ENCODE measurements at regions of chr4 and their contacts with region 1.

Region 1: DNA sequence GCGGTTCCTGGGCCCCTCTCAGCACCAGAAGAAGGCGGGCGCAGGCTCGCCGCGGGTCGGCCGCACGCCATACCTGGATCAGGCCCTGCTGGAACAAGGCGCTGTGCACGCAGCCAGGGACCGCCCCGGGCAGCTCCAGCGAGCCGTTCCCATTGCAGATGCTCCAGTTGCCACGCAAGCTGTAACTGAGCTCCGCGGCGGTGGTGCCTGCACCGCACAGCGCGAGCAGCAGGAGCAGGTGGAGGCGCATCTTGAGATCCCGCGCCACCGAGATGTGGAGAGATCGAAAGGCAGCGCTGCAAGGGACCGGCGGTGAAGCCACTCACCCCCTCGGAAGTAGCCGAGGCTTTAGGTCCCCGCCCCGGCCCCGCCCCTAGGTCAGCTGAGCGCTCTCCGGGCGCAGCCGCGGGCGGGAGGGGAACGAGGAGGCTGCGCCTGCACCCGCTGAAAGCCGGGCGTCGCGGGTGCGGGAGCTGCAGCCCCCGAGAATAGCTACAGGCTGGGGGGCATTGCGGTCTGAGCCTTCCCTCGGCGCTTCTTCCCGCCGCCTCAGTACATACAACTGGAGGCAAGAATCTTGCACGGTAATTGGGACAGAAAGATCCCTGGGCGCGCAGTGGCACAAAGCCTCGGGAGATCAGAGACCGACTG is at the start of gene MANBA:
- DNase-seq: peak; percentile 77
- ATAC-seq: peak; percentile 79
- H3K4me3 Mint-ChIP-seq: peak within 1 kb of the TSS; percentile 93
- H3K27ac Mint-ChIP-seq: peak within 1 kb of the TSS; percentile 96
- H3K4me1 Mint-ChIP-seq: peaks cover 51% of the 10 kb centered on the region
- H3K27me3 Mint-ChIP-seq: no peaks in the 10 kb centered on the region
- CTCF ChIP-seq: no peak
- total RNA-seq, gene MANBA: 41.2 and 55.3 TPM in 2 replicates

Region 2: DNA sequence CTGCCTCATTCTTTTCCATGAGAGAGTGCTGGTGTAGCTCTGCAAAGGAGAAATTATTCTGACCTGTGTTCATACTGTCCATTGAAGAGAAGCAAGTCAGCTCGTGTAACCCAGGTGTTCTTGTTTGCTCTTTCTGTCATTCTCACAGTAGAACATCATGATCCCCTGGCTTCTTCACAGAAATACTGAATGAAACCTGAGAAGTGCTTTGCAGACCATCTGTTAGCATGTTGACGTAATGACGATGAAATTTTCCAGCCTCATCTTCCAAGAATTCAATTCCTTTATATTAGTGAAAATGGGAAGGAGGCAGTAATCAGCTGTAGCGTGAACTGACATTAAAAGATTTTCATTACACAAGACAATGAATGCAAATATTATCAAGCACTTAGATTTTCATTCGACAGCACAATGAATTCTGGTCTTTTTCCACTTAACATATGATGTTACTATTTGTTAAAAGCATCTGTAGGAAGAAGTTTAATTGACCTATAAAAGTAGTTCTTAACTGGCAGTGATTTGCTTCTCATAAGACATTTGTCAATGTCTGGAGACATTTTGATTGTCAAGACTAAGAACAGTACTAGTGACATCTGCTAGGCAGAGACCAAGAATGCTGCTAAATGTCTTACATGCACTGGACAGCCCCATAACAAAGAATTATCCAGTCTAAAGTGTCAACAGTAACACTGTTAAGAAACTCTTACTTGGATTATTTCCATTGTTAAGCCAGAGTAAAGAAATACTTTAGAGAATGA is 724.0 kb before region 1 on chr4:
- CTCF ChIA-PET with region 1: no interaction called
- POLR2A ChIA-PET with region 1: no interaction called
- intact Hi-C with region 1: no loop called
- DNase-seq: no peak
- ATAC-seq: no peak
- H3K4me3 Mint-ChIP-seq: no peak overlapping the region
- H3K27ac Mint-ChIP-seq: peak overlapping the region; percentile 50
- H3K4me1 Mint-ChIP-seq: peaks cover 29% of the 10 kb centered on the region
- H3K27me3 Mint-ChIP-seq: no peaks in the 10 kb centered on the region
- CTCF ChIP-seq: no peak

Region 3: DNA sequence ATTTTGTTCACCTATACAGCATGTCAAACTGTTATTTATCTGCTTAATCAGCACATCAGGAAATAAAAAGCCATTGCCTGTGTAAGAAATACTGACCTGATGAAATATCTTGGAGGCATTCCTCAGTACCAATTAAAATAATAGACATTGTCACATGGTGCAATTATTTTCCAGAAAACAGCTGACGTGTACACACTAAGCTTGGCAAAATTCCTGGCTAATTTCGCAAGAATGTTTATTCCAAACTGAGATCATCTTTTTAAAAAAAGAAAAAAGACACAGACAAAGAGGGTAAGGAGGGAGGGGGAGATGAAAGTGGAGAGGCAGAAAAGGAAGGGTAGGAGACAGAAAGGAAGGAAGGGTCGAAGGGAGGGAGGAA is 321.5 kb before region 1 on chr4:
- CTCF ChIA-PET with region 1: no interaction called
- POLR2A ChIA-PET with region 1: no interaction called
- intact Hi-C with region 1: loop called (anchors 10 kb)
- DNase-seq: no peak
- ATAC-seq: no peak
- H3K4me3 Mint-ChIP-seq: no peak overlapping the region
- H3K27ac Mint-ChIP-seq: no peak overlapping the region
- H3K4me1 Mint-ChIP-seq: no peaks in the 10 kb centered on the region
- H3K27me3 Mint-ChIP-seq: no peaks in the 10 kb centered on the region
- CTCF ChIP-seq: no peak

Region 4: DNA sequence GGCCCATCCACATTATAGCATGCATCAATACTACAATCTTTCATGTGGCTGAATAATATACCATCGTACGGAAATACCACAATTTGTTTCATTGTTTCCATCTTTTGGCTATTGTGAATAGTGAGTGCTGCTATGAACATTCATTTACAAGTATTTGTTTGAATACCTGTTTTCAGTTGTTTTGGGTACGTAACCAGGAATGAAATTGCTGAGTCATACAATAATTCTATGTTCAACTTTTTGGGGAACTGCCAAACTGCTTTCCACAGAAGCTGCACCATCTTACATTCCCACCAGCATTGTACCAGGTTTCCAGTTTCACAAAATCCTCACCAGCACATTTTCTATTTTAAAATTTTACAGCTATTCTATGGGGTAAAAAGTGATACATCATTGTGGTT is 28.5 kb after region 1 on chr4:
- CTCF ChIA-PET with region 1: no interaction called
- POLR2A ChIA-PET with region 1: interaction called, 4 read pairs
- intact Hi-C with region 1: loop called (anchors 2 kb)
- DNase-seq: no peak
- ATAC-seq: no peak
- H3K4me3 Mint-ChIP-seq: no peak overlapping the region
- H3K27ac Mint-ChIP-seq: no peak overlapping the region
- H3K4me1 Mint-ChIP-seq: peaks cover 5% of the 10 kb centered on the region
- H3K27me3 Mint-ChIP-seq: no peaks in the 10 kb centered on the region
- CTCF ChIP-seq: no peak

Region 5: GRCh38 chr4:103019308-103020124 is 258.7 kb after region 1 on chr4 and contains the start of gene SLC9B1:
- CTCF ChIA-PET with region 1: no interaction called
- POLR2A ChIA-PET with region 1: interaction called, 5 read pairs
- intact Hi-C with region 1: loop called (anchors 1 kb)
- DNase-seq: peak; percentile 91
- ATAC-seq: peak; percentile 98
- H3K4me3 Mint-ChIP-seq: peak within 1 kb of the TSS; percentile 92
- H3K27ac Mint-ChIP-seq: peak within 1 kb of the TSS; percentile 96
- H3K4me1 Mint-ChIP-seq: peaks cover 28% of the 10 kb centered on the region
- H3K27me3 Mint-ChIP-seq: no peaks in the 10 kb centered on the region
- CTCF ChIP-seq: no peak
- total RNA-seq, gene SLC9B1: 1.2 and 2.5 TPM in 2 replicates